GM18951 (cell line): ENCODE measurements at regions of chr2 and their contacts with region 1.

Region 1: GRCh38 chr2:133886735-133887660 is 318.7 kb upstream of the NCKAP5 start:
- POLR2A ChIP-seq: no peak

Region 2: DNA sequence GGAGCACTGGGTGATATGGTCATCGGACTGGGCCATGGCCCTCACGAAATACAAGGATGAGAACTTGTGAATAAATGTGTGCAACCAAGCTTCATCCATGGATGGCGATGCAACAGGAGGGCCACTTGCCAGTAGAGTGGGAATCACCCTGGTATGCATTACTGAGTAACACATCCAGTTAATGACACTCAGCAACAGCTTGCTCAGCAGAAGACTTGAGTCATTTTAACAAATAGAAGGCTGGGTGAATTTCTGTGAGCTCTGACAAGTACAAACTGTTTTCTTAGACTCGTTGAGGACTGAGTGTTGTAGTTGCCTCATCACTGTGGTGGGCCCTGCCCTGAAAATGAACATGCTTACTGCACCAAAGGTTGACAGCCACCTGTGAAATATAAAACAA is 540.3 kb before region 1 on chr2:
- in situ Hi-C with region 1: no loop called
- POLR2A ChIP-seq: no peak

Region 3: DNA sequence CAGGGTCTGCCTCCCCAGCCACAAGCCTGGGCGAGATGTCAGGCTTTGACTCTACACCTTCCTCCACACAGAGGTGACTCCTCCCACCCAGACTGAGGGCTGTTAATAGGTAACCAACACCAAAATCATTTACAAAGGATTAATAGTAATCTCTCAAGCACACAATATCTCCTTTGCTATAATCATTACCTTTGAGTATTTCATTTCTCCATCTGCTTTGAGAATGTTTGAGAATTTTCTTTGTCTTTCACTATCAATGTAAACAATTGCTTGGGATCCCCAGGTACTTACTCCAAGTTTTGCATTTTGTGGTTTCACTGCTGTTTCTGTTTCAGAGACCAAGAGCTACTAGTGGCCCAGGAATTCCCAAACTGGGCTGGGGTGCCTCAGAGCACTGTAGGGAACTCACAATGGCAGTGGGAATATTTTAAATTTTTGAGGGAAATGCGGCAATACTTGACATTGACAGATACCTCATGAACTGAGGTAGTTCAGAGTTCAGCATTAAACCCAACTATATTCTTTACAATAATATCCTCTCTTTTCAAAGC is 200.4 kb after region 1 on chr2:
- in situ Hi-C with region 1: loop called (anchors 25 kb)
- POLR2A ChIP-seq: no peak

Region 4: GRCh38 chr2:134245340-134245984 is 358.5 kb after region 1 on chr2:
- in situ Hi-C with region 1: loop called (anchors 25 kb)
- POLR2A ChIP-seq: no peak

Region 5: GRCh38 chr2:134446383-134447017 is 559.5 kb after region 1 on chr2:
- in situ Hi-C with region 1: loop called (anchors 25 kb)
- POLR2A ChIP-seq: no peak